ENCODE measurements at regions of chr11 and their contacts with region 1.

Region 1: DNA sequence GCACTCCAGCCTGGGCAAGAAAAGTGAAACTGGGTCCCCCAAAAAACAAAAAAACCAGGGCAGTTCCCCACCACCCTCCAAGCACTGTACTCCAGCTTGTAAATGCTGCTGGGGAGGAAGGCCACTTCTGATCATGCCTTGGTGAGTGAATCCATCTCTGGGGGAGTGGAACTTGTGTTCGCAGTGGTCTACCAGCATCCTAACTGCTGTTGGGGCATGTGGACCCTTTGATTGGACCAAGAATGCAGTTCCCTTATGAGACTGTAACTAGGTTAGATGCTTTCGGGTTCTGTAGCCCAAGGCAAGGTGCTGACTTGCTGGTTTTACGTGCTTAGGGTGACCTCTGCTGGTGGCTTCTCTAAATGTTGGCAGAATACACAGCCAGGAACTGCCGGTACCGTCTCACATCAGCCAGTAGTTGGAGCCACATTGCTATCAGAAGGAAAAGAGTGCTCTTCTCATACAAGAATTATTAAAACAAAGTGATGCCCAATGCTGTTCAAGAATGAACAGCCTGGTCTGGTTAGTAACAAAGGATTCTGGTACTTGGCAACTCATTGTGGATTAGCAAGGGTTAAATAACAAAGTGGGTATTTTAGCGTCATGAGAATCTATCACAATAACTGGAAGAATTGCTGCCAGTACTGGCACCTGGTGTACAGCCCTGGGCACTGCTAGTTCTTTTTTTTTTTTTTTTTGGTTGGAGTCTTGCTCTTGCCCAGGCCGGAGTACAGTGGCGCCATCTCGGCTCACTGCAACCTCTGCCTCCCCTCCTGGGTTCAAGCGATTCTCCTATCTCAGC is 13.0 kb downstream of the EIF1AD start:
- DNase-seq: peak; percentile 97
- H3K4me3 ChIP-seq: no peak overlapping the region
- H3K27ac ChIP-seq: no peak overlapping the region
- H3K4me1 ChIP-seq: no peaks in the 10 kb centered on the region
- H3K27me3 ChIP-seq: no peaks in the 10 kb centered on the region
- CTCF ChIP-seq: peak; percentile 86 to 99
- POLR2A ChIP-seq: no peak

Region 2: GRCh38 chr11:65637794-65638317 is 351.1 kb before region 1 on chr11 and contains the start of gene SIPA1:
- CTCF ChIA-PET with region 1: interaction called, 3 read pairs
- POLR2A ChIA-PET with region 1: no interaction called
- dilution Hi-C with region 1: no loop called
- intact Hi-C with region 1: loop called (anchors 5 kb)
- DNase-seq: peak; percentile 96
- H3K4me3 ChIP-seq: peak within 1 kb of the TSS; percentile 56 to 62 (median 62)
- H3K27ac ChIP-seq: peak within 1 kb of the TSS; percentile 78
- H3K4me1 ChIP-seq: peaks cover 41% of the 10 kb centered on the region
- H3K27me3 ChIP-seq: no peaks in the 10 kb centered on the region
- CTCF ChIP-seq: peak; percentile 58 to 83
- POLR2A ChIP-seq: peak; percentile 96
- total RNA-seq, gene SIPA1: 119 and 128 TPM in 2 replicates

Region 3: GRCh38 chr11:65817835-65818742 is 170.9 kb before region 1 on chr11:
- CTCF ChIA-PET with region 1: interaction called, 4 read pairs
- POLR2A ChIA-PET with region 1: interaction called, 4 read pairs
- dilution Hi-C with region 1: no loop called
- intact Hi-C with region 1: loop called (anchors 2 kb)
- DNase-seq: peak; percentile 80
- H3K4me3 ChIP-seq: peak overlapping the region; percentile 13 to 74 (median 66)
- H3K27ac ChIP-seq: no peak overlapping the region
- H3K4me1 ChIP-seq: no peaks in the 10 kb centered on the region
- H3K27me3 ChIP-seq: peaks cover 0 to 2% of the 10 kb centered on the region in 2 experiments
- CTCF ChIP-seq: peak; percentile 97 to 99
- POLR2A ChIP-seq: no peak

Region 4: GRCh38 chr11:65919146-65920033 is 69.6 kb before region 1 on chr11 and contains the start of gene DRAP1:
- CTCF ChIA-PET with region 1: interaction called, 3 read pairs
- POLR2A ChIA-PET with region 1: no interaction called
- dilution Hi-C with region 1: no loop called
- intact Hi-C with region 1: loop called (anchors 1 kb)
- DNase-seq: peak; percentile 97
- H3K4me3 ChIP-seq: peak within 1 kb of the TSS; percentile 70 to 90 (median 71)
- H3K27ac ChIP-seq: peak within 1 kb of the TSS; percentile 92
- H3K4me1 ChIP-seq: peaks cover 49% of the 10 kb centered on the region
- H3K27me3 ChIP-seq: no peaks in the 10 kb centered on the region
- CTCF ChIP-seq: no peak
- POLR2A ChIP-seq: peak; percentile 23
- total RNA-seq, gene DRAP1: 114 and 118 TPM in 2 replicates

Region 5: GRCh38 chr11:66045177-66045639 is 56.2 kb after region 1 on chr11:
- CTCF ChIA-PET with region 1: interaction called, 11 read pairs
- POLR2A ChIA-PET with region 1: no interaction called
- dilution Hi-C with region 1: no loop called
- intact Hi-C with region 1: loop called (anchors 1 kb)
- DNase-seq: peak; percentile 69
- H3K4me3 ChIP-seq: no peak overlapping the region
- H3K27ac ChIP-seq: no peak overlapping the region
- H3K4me1 ChIP-seq: no peaks in the 10 kb centered on the region
- H3K27me3 ChIP-seq: peaks cover 2 to 3% of the 10 kb centered on the region in 2 experiments
- CTCF ChIP-seq: peak; percentile 91 to 98
- POLR2A ChIP-seq: no peak

Region 6: DNA sequence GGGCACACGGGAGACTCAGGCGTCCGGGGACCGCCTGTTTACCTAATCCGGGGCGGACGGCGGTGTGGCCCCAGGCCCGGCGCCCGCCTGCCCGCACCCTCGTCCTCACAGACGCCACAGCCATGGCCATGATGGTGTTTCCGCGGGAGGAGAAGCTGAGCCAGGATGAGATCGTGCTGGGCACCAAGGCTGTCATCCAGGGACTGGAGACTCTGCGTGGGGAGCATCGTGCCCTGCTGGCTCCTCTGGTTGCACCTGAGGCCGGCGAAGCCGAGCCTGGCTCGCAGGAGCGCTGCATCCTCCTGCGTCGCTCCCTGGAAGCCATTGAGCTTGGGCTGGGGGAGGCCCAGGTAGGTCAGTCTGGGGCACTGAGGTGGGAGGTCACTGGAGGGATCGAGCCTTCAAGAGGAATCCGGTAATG is 269.5 kb after region 1 on chr11:
- CTCF ChIA-PET with region 1: no interaction called
- POLR2A ChIA-PET with region 1: no interaction called
- dilution Hi-C with region 1: no loop called
- intact Hi-C with region 1: no loop called
- DNase-seq: no peak
- H3K4me3 ChIP-seq: peak overlapping the region; percentile 4 to 99 (median 46)
- H3K27ac ChIP-seq: no peak overlapping the region
- H3K4me1 ChIP-seq: peaks cover 13% of the 10 kb centered on the region
- H3K27me3 ChIP-seq: peaks cover 0 to 4% of the 10 kb centered on the region in 2 experiments
- CTCF ChIP-seq: peak in 1 of 2 donors; percentile 12
- POLR2A ChIP-seq: no peak

Region 7: GRCh38 chr11:66720223-66720947 is 731.4 kb after region 1 on chr11:
- CTCF ChIA-PET with region 1: no interaction called
- POLR2A ChIA-PET with region 1: no interaction called
- dilution Hi-C with region 1: no loop called
- intact Hi-C with region 1: no loop called
- DNase-seq: peak; percentile 38
- H3K4me3 ChIP-seq: no peak overlapping the region
- H3K27ac ChIP-seq: no peak overlapping the region
- H3K4me1 ChIP-seq: no peaks in the 10 kb centered on the region
- H3K27me3 ChIP-seq: no peaks in the 10 kb centered on the region
- CTCF ChIP-seq: no peak
- POLR2A ChIP-seq: no peak

Measured in endothelial cell of umbilical vein (primary cell).